Gastrocnemius medialis (tissue), 4 donors: ENCODE measurements at regions of chr4 and their contacts with region 1.

Region 1: GRCh38 chr4:15457406-15458201 is 12.1 kb upstream of the CC2D2A start:
- DNase-seq: no peak
- ATAC-seq: peak; percentile 36 to 70
- H3K4me3 ChIP-seq: no peak overlapping the region
- H3K27ac ChIP-seq: peak overlapping the region in 2 of 4 donors; percentile 0 to 42
- H3K4me1 ChIP-seq: peaks cover 0 to 13% of the 10 kb centered on the region in 2 donors
- H3K27me3 ChIP-seq: no peaks in the 10 kb centered on the region
- CTCF ChIP-seq: peak; percentile 52 to 77 (median 65)
- POLR2A ChIP-seq: no peak

Region 2: GRCh38 chr4:15238720-15239119 is 218.9 kb before region 1 on chr4:
- in situ Hi-C with region 1: loop called (anchors 5 to 10 kb)
- intact Hi-C with region 1: loop called (anchors 2 kb)
- DNase-seq: no peak
- ATAC-seq: peak; percentile 44 to 48
- H3K4me3 ChIP-seq: no peak overlapping the region
- H3K27ac ChIP-seq: no peak overlapping the region
- H3K4me1 ChIP-seq: no peaks in the 10 kb centered on the region
- H3K27me3 ChIP-seq: no peaks in the 10 kb centered on the region
- CTCF ChIP-seq: peak in 2 of 5 experiments; percentile 24 to 30
- POLR2A ChIP-seq: no peak

Region 3: GRCh38 chr4:17448689-17449088 is 1991.1 kb after region 1 on chr4:
- in situ Hi-C with region 1: no loop called
- intact Hi-C with region 1: no loop called
- DNase-seq: no peak
- ATAC-seq: no peak
- H3K4me3 ChIP-seq: no peak overlapping the region
- H3K27ac ChIP-seq: no peak overlapping the region
- H3K4me1 ChIP-seq: no peaks in the 10 kb centered on the region
- H3K27me3 ChIP-seq: no peaks in the 10 kb centered on the region
- CTCF ChIP-seq: no peak
- POLR2A ChIP-seq: no peak